Sciatic nerve (tissue), 2 donors: ENCODE measurements at regions of chr6 and their contacts with region 1.

Region 1: GRCh38 chr6:53581173-53581773 is 36.4 kb upstream of the GCLC start:
- DNase-seq: no peak
- ATAC-seq: peak; percentile 52

Region 2: DNA sequence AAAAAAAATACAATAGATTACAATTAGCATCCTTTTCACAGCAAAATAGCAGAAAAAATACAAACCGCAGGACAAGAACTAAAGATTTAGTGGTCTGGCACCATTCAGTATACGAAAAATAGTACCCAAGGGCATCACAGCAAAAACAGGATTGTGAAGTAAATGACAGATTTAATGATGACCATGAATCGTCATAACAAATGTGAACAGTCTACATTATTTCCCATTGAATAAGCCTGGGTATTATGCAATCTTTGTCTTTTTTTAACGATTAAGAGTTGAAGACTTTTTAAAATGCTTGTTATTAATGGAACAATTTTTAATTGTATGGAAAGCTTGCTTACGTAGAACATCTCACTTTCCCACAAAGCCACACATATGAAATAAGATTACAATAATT is 1926.6 kb before region 1 on chr6:
- intact Hi-C with region 1: no loop called
- DNase-seq: no peak
- ATAC-seq: no peak

Region 3: DNA sequence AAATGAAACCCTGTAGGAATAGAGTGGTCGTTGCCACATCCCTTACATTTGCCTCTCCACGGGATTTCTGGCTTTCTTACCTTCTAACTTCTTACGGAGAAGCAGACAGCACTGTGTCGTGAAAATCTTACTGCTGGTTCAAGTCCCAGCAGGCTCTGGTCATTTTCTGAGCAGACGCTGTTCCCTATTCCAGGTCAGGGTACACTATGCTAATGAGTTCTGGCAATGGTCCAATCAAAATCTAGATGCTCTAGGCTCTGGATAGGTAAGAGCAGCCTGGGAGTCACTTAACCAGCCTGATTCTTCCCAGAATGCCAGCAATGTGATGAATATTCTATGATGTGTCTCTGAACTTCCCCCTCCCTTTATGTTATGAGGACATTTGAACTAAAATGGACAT is 432.6 kb before region 1 on chr6 and contains the start of gene GCM1:
- intact Hi-C with region 1: loop called (anchors 5 kb)
- DNase-seq: no peak
- ATAC-seq: no peak
- total RNA-seq, gene GCM1: not detected